HEK293 (cell line): ENCODE measurements at regions of chr1 and their contacts with region 1.

Region 1: DNA sequence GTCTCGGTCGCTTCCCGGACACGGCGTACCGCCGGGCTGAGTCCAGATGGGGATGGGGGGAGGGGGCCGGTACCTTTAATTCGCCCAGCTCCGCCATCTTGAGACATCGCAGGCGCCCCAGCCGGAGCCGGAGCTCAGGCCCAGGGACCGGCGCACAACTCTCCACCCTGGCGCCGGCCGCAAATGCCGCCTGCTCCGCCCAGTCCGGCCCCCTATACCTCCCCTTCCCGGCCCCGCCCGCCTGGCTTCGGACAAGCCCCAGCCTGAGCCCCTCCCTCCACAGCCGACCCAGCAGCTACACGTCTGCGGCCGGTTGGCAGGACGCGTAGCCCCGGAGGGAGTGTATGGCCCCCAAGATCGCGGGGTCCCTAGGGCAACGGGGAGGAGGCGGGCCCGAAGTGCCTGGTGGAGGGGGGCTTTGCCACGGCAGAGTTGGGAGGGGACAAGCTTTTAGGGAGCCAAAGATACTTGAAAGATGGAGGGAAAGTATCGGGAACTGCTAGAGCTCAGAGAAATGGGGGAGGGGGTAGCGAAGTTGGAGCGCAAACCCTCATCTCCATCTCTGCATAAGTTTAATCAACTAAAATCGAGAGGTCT is at the start of gene PIAS3:
- H3K4me3 ChIP-seq: peak within 1 kb of the TSS; percentile 68
- H3K27ac ChIP-seq: peak within 1 kb of the TSS; percentile 65; the same call in 1 of the 2 replicates
- H3K4me1 ChIP-seq: no peaks in the 10 kb centered on the region
- CTCF ChIP-seq: no peak

Region 2: DNA sequence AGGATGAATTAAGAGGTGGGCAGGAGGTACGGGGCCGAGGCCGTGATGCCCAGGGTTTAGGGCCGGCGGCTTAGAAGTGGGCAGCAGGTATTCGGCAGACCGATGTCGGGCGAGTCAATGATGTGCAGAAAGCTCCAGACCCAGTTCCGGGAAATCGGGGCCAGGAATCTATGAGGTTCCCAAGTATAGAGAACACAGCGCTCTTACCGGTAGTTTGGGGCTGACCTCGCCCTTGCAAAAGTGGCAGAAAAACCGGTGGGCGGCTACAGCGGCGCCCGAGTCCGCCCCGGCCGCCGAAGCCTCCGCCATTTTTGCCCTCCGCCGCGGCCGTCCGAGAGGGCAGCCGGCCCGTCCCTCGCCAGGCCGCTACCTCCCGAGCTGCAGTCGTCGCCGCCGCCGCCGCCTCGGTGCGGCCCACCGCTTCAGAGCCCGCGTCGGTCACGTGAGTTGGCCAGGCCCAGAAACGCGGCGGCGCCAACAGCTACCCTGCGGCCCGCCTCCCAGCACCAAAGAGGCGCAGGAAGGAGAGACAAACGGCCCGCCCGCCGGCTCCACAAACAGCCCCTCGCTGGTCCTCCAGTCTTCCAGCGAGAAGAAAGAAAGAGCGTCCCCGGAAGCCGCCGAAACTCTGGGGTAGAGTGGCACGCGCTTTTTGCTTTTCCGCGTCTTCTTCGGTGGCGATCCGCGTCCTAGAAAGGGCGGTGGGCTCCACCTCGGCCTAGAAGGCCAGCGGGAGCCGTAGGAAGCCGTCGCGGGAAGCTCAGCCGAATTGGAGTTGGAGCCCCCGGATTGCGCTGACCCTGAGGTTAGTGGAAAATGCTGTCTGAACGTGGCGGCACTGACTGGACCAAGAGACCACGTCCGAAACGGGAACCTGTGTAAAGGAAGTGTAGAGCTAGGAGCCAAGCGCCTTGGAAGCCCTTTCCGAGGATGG is 35.2 kb before region 1 on chr1 and contains the starts of genes POLR3C and RNF115:
- CTCF ChIA-PET with region 1: interaction called, 4 read pairs
- POLR2A ChIA-PET with region 1: interaction called, 23 read pairs
- H3K4me3 ChIP-seq: peak within 1 kb of the TSS; percentile 92
- H3K27ac ChIP-seq: peak within 1 kb of the TSS; percentile 81
- H3K4me1 ChIP-seq: no peaks in the 10 kb centered on the region
- CTCF ChIP-seq: peak; percentile 17; the same call in 1 of the 2 replicates

Region 3: DNA sequence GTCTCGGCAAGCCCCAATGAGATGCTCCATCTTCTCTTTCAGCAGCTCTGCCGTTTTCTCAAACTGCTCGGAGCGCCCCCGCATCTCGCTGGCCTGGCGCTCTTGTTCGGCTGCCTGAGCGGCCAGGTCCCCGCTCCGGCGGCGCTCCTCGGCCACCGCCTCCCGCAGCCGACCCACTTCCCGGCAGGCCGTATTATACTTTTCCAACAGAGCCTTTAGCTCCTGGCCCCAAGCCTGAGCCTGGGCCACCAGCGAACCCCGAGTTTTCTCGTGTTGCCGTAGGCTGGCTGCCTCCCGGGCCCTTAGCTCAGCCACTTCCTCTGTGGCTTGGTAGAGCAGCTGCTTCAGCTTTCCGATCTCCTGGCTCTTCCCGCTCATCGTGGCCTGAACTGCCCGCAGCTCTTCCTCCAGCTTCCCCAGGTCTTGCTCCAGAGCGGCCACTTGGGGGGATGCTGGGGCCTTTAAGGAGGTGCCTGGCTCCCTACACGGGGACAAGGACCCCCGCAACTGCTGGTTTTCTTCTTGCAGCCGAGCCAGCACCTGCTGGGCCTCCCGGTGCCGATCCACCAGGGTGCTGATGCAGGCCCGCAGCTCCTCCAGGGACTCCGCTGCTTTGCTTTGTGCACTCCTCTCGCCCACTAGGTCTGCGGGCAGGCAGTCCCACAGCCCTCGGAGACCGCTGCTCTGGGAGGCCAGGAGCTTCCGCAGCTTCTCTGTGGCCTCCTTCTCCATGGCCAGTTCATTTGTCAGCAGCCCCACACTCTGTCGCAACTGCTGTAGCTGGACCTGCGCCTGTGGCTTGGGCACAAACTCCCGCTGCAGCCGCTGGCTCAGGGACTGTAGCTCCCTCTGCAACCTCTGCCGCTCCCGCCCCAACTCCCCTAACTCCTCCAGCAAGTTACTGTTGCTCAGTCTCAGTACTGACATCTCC is 13.3 kb after region 1 on chr1:
- CTCF ChIA-PET with region 1: interaction called, 4 read pairs
- POLR2A ChIA-PET with region 1: interaction called, 18 read pairs
- H3K4me3 ChIP-seq: no peak overlapping the region
- H3K27ac ChIP-seq: no peak overlapping the region
- H3K4me1 ChIP-seq: no peaks in the 10 kb centered on the region
- CTCF ChIP-seq: no peak

Region 4: GRCh38 chr1:145927063-145927886 is 68.3 kb after region 1 on chr1 and contains the start of gene RBM8A:
- CTCF ChIA-PET with region 1: no interaction called
- POLR2A ChIA-PET with region 1: interaction called, 23 read pairs
- H3K4me3 ChIP-seq: peak within 1 kb of the TSS; percentile 83
- H3K27ac ChIP-seq: peak within 1 kb of the TSS; percentile 59
- H3K4me1 ChIP-seq: no peaks in the 10 kb centered on the region
- CTCF ChIP-seq: peak; percentile 98

Region 5: GRCh38 chr1:145963995-145964901 is 105.3 kb after region 1 on chr1 and contains the starts of genes ANKRD34A and POLR3GL:
- CTCF ChIA-PET with region 1: no interaction called
- POLR2A ChIA-PET with region 1: interaction called, 27 read pairs
- H3K4me3 ChIP-seq: peak within 1 kb of the TSS; percentile 70
- H3K27ac ChIP-seq: peak within 1 kb of the TSS; percentile 16; the same call in 1 of the 2 replicates
- H3K4me1 ChIP-seq: peaks cover 9% of the 10 kb centered on the region
- CTCF ChIP-seq: no peak

Region 6: GRCh38 chr1:146036965-146037646 is 178.1 kb after region 1 on chr1:
- CTCF ChIA-PET with region 1: interaction called, 4 read pairs
- POLR2A ChIA-PET with region 1: interaction called, 17 read pairs
- H3K4me3 ChIP-seq: peak overlapping the region; percentile 74
- H3K27ac ChIP-seq: peak overlapping the region; percentile 86
- H3K4me1 ChIP-seq: no peaks in the 10 kb centered on the region
- CTCF ChIP-seq: no peak